Activated T-helper 2 cell treated with anti-CD3 and anti-CD28 coated beads, Interferon-gamma antibody, Interleukin-2, Interleukin-4, amounts not matched to agents 10 μg/mL and 5 μg/mL and 100 μg/mL, durations not matched to agents 14 hours and 24 hours and 36 hours (primary cell): ENCODE measurements at regions of chr4 and their contacts with region 1.

Region 1: DNA sequence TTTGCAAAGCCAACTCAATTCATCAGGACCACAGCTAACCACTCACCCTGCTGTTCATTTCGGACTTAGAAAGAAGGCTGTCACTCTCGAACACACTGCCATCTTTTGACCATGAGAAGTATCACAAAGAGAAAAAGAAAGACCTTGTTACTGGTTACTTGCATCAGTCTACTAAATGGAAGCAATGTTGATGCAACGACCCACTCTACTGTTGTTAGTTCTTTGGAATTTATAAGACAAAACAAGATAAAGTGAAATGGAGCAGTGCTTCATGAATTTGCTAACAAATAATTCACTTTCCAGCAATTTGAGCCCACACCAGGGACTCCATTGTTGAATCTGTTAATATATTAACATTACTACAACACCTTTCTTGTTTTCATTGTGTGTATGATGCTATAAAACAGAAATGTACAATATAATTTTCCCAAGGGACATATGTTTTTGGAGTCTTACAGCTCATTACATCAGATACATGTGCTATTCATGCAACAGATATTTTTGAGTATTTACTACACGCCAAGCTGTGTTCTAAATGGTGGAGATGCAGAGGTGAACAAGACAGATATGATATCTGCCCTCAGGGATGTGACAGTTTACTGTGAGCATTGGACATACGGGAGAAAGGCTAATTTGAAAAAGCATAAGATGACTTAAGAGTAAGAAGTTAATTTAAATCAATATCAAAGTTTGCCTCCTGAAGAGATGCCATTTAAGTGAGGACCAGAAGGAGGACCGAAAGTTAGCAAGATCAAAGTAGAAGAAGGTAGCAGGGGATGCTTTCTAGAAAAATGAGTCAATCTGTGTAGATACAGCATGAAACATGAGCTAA is 87.2 kb downstream of the AREG start:
- DNase-seq: no peak
- H3K4me3 Mint-ChIP-seq: no peak overlapping the region
- H3K27ac Mint-ChIP-seq: no peak overlapping the region
- H3K4me1 Mint-ChIP-seq: peaks cover 2% of the 10 kb centered on the region
- H3K27me3 Mint-ChIP-seq: peaks cover 6% of the 10 kb centered on the region

Region 2: GRCh38 chr4:74320559-74321118 is 211.5 kb before region 1 on chr4:
- intact Hi-C with region 1: loop called (anchors 1 kb)
- DNase-seq: no peak
- H3K4me3 Mint-ChIP-seq: no peak overlapping the region
- H3K27ac Mint-ChIP-seq: no peak overlapping the region
- H3K4me1 Mint-ChIP-seq: peaks cover 4% of the 10 kb centered on the region
- H3K27me3 Mint-ChIP-seq: peaks cover 32% of the 10 kb centered on the region

Region 3: DNA sequence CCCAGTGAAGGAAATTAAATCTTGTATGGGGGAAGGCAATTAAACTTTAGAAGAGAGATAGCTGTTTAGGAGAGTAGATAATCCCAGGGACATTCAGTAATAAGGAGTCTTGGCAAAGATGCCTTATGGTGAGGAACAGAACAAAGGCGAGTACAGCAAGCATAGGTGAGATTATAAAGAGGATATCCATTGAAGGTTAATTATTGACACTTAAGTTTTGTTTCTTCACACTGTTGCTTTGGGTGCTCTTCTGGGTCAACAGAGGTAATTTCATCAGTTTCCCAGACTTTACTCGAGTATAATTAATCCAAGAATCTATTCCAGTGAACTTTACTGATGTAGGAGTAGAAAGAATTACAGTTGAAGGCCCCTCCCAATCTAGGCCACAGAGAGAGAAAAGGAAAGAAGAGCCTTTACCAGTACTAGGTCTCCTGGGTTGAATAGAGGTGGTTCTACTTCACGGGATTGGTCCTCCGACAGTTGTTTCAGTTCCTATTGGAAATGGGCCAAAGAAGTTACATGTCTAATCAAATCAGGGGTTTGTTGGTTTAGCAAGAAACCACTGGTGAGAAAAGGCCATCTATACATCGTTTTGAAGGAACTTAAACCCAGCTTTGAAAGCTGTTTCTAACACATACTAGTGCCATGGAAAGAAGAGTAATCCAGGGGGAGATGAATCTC is 196.7 kb before region 1 on chr4:
- intact Hi-C with region 1: no loop called
- DNase-seq: no peak
- H3K4me3 Mint-ChIP-seq: no peak overlapping the region
- H3K27ac Mint-ChIP-seq: no peak overlapping the region
- H3K4me1 Mint-ChIP-seq: no peaks in the 10 kb centered on the region
- H3K27me3 Mint-ChIP-seq: peaks cover 10% of the 10 kb centered on the region

Region 4: GRCh38 chr4:74376888-74377483 is 155.2 kb before region 1 on chr4:
- intact Hi-C with region 1: loop called (anchors 1 kb)
- DNase-seq: no peak
- H3K4me3 Mint-ChIP-seq: no peak overlapping the region
- H3K27ac Mint-ChIP-seq: no peak overlapping the region
- H3K4me1 Mint-ChIP-seq: peaks cover 6% of the 10 kb centered on the region
- H3K27me3 Mint-ChIP-seq: peaks cover 8% of the 10 kb centered on the region

Region 5: GRCh38 chr4:74623041-74623440 is 90.9 kb after region 1 on chr4:
- intact Hi-C with region 1: loop called (anchors 10 kb)
- DNase-seq: no peak
- H3K4me3 Mint-ChIP-seq: no peak overlapping the region
- H3K27ac Mint-ChIP-seq: no peak overlapping the region
- H3K4me1 Mint-ChIP-seq: peaks cover 26% of the 10 kb centered on the region
- H3K27me3 Mint-ChIP-seq: peaks cover 2% of the 10 kb centered on the region

Region 6: DNA sequence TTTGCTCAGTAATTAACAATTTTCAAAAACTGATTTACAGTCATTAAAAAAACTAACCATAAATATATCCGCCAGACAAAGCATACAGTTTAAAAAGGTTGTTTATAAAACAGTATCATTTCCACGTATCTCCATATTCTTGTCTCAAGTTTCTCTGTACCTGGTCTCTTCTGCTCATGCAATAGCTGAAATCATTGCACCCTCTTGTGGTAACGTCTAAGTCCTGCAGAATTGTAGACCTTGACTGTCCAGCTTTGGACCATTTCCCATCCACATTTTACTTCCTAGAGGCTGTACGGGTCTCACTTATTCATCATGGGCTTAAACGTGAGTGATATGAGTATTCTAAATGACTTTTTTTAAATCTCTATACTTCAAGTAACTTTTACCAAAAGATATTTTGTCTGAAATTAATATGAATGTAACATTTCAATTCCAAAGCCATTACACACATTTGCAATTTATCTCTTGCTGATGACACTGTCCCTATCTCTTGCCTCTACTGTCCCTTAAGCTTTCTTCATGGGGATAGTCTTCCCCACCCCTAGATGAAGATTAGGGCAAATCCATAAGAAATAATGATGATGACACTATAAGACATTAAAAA is 143.6 kb after region 1 on chr4:
- intact Hi-C with region 1: loop called (anchors 5 kb)
- DNase-seq: no peak
- H3K4me3 Mint-ChIP-seq: no peak overlapping the region
- H3K27ac Mint-ChIP-seq: no peak overlapping the region
- H3K4me1 Mint-ChIP-seq: peaks cover 2% of the 10 kb centered on the region
- H3K27me3 Mint-ChIP-seq: peaks cover 6% of the 10 kb centered on the region